Heart right ventricle (tissue), 16 donors: ENCODE measurements at regions of chr5 and their contacts with region 1.

Region 1: GRCh38 chr5:68215208-68215897 is at the start of gene PIK3R1:
- DNase-seq: peak; percentile 95 to 97
- ATAC-seq: peak; percentile 93 to 98 (median 96)
- H3K4me3 ChIP-seq: peak within 1 kb of the TSS; percentile 80 to 99 (median 96)
- H3K27ac ChIP-seq: peak within 1 kb of the TSS; percentile 97 to 100 (median 99)
- H3K4me1 ChIP-seq: peaks cover 2 to 40% (median 31%) of the 10 kb centered on the region in 9 donors
- H3K27me3 ChIP-seq: no peaks in the 10 kb centered on the region
- CTCF ChIP-seq: peak in 7 of 9 donors; percentile 4 to 70 (median 43)
- total RNA-seq, gene PIK3R1: 45.6 to 269 (median 148) TPM

Region 2: DNA sequence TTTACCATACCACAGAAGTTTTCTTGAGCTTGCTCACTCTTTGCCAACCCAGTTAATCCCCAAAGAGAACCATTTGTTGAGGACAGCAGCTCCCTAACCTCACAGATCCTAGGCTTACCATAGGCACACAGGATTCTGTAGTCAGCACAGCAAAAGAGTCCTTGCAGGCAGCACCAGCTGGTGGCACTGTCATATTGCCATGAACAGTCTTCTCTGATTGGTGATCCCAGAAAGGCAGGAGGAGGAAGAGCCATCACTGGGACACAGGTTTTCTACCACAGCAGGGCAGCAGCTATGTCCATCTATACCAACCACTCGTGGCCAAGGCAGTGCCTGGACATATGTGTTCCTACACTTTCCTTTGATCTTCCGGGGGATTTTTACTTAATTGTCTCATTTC is 721.7 kb before region 1 on chr5:
- intact Hi-C with region 1: loop called in 1 of 10 experiments (anchors 10 kb)
- DNase-seq: peak; percentile 13 to 44
- ATAC-seq: peak; percentile 55 to 95 (median 91)
- H3K4me3 ChIP-seq: no peak overlapping the region
- H3K27ac ChIP-seq: no peak overlapping the region
- H3K4me1 ChIP-seq: peaks cover 0 to 13% (median 0%) of the 10 kb centered on the region in 9 donors
- H3K27me3 ChIP-seq: no peaks in the 10 kb centered on the region
- CTCF ChIP-seq: peak in 7 of 9 donors; percentile 35 to 65 (median 58)

Region 3: GRCh38 chr5:67809589-67809988 is 405.8 kb before region 1 on chr5:
- intact Hi-C with region 1: loop called in 2 of 10 experiments (anchors 5 to 10 kb)
- DNase-seq: no peak
- ATAC-seq: no peak
- H3K4me3 ChIP-seq: no peak overlapping the region
- H3K27ac ChIP-seq: peak overlapping the region in 8 of 10 donors; percentile 13 to 88 (median 80)
- H3K4me1 ChIP-seq: peaks cover 2 to 41% (median 18%) of the 10 kb centered on the region in 9 donors
- H3K27me3 ChIP-seq: no peaks in the 10 kb centered on the region
- CTCF ChIP-seq: no peak

Region 4: GRCh38 chr5:67983251-67984110 is 231.9 kb before region 1 on chr5:
- intact Hi-C with region 1: loop called in 1 of 10 experiments (anchors 10 kb)
- DNase-seq: no peak
- ATAC-seq: no peak
- H3K4me3 ChIP-seq: no peak overlapping the region
- H3K27ac ChIP-seq: peak overlapping the region in 1 of 10 donors; percentile 8
- H3K4me1 ChIP-seq: peaks cover 0 to 19% (median 12%) of the 10 kb centered on the region in 9 donors
- H3K27me3 ChIP-seq: no peaks in the 10 kb centered on the region
- CTCF ChIP-seq: no peak

Region 5: DNA sequence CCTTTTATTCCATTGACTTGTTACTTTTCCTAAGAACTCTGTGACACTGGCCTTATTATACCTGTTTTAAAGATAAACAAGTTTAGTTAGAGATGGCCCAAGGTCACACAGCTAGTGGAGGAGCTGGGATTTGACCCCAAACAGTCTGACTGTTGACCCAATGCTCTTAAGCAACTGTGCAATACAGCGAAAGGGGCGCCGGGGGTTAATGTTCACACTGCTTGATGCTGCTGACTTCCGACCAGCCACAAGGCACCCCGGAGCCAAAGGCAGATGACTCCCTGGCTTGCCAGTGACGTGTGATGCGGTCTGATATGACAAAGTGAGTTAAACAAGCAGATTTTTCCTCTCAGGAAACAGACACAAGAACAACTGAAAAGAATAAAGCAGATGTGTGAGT is 24.1 kb after region 1 on chr5:
- intact Hi-C with region 1: loop called in 1 of 10 experiments (anchors 2 kb)
- DNase-seq: peak; percentile 47 to 76
- ATAC-seq: peak; percentile 58 to 91 (median 75)
- H3K4me3 ChIP-seq: peak overlapping the region in 6 of 10 donors; percentile 6 to 27 (median 18)
- H3K27ac ChIP-seq: peak overlapping the region in 9 of 10 donors; percentile 13 to 82 (median 70)
- H3K4me1 ChIP-seq: peaks cover 8 to 99% (median 88%) of the 10 kb centered on the region in 9 donors
- H3K27me3 ChIP-seq: no peaks in the 10 kb centered on the region
- CTCF ChIP-seq: no peak